Prostate gland (tissue), 2 donors: ENCODE measurements at regions of chr9 and their contacts with region 1.

Region 1: GRCh38 chr9:70519912-70520724 is 105.7 kb upstream of the KLF9 start:
- DNase-seq: no peak
- H3K4me3 ChIP-seq: no peak overlapping the region
- H3K27ac ChIP-seq: no peak overlapping the region
- H3K4me1 ChIP-seq: no peaks in the 10 kb centered on the region
- H3K27me3 ChIP-seq: no peaks in the 10 kb centered on the region
- CTCF ChIP-seq: no peak
- POLR2A ChIP-seq: no peak

Region 2: GRCh38 chr9:70553707-70554673 is 33.9 kb after region 1 on chr9:
- intact Hi-C with region 1: loop called (anchors 5 kb)
- DNase-seq: peak; percentile 14
- H3K4me3 ChIP-seq: no peak overlapping the region
- H3K27ac ChIP-seq: no peak overlapping the region
- H3K4me1 ChIP-seq: no peaks in the 10 kb centered on the region
- H3K27me3 ChIP-seq: no peaks in the 10 kb centered on the region
- CTCF ChIP-seq: no peak
- POLR2A ChIP-seq: no peak